Endothelial cell of umbilical vein (primary cell): ENCODE measurements at regions of chr3 and their contacts with region 1.

Region 1: DNA sequence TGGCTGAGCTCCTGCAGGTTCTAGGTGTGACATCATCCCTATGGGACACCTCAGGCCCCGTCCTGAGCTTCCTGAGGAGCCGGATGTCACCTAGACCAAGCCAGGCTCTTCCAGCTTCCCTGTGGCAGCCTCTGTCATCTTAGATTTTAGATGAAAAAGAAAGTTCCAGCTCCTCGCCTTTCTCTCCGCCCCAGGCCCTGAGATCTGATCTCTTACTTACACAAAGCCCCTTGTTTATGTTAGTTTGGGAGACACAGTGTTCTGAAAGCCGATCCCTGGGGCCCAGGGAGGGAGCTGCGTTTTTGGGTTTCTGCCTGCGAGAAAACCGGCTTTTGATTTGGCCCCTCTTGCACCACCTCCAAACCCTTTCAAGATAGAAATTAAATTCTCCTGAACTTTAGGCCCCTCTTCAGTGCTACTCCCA is 40.2 kb upstream of the FAM107A start:
- DNase-seq: no peak
- H3K4me3 ChIP-seq: no peak overlapping the region
- H3K27ac ChIP-seq: no peak overlapping the region
- H3K4me1 ChIP-seq: no peaks in the 10 kb centered on the region
- H3K27me3 ChIP-seq: no peaks in the 10 kb centered on the region
- CTCF ChIP-seq: no peak
- POLR2A ChIP-seq: no peak

Region 2: DNA sequence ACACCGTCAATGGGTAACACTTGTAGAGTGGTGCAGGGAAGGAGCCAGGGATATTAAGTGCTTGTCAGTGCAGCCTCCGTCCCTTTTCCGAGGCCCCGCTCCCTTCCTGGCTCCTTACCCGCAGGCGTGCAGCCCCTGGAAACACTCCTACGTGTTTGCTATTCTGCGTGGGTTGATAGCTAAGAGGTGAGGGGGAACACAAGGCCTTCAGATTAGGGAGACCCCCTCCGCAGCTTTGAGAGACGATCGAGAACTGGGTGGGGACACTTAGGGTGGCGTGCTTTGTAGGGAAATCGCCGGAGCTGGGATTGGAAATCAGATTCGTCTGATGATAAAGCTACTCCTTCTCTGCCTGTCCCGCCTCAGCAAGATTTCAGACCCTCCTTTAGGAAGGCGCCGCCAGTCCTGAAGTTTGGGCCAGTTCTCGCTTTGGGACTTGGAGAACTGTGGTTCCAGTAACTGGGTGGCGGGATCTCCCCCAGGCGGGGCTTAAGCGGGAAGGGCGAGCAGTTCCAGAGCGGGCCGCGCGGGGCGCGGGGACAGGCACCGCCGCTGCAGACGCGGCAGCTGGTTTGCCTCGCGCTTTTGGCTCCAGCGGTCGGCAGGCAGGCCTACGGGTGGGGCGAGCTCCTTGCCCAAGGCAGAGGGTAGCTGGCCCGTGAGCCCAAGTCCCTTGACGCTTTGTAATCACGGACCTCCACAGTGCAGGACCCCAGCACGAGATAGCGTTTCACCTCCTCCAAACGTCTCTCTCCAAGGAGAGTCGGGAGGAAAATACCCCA is 32.2 kb before region 1 on chr3:
- CTCF ChIA-PET with region 1: interaction called, 10 read pairs
- POLR2A ChIA-PET with region 1: no interaction called
- dilution Hi-C with region 1: no loop called
- intact Hi-C with region 1: no loop called
- DNase-seq: peak; percentile 67
- H3K4me3 ChIP-seq: peak overlapping the region; percentile 40 to 65 (median 51)
- H3K27ac ChIP-seq: no peak overlapping the region
- H3K4me1 ChIP-seq: peaks cover 5% of the 10 kb centered on the region
- H3K27me3 ChIP-seq: peaks cover 20 to 26% of the 10 kb centered on the region in 2 experiments
- CTCF ChIP-seq: peak; percentile 74 to 87
- POLR2A ChIP-seq: no peak